Activated T-helper 1 cell treated with anti-CD3 and anti-CD28 coated beads, Interleukin-12 subunit alpha, Interleukin-12 subunit beta, Interleukin-2, Interleukin-4 antibody, amounts not matched to agents 30 ng/mL and 10 ng/mL and 1 ng/mL, durations not matched to agents 14 hours and 24 hours and 36 hours (primary cell): ENCODE measurements at regions of chr12 and their contacts with region 1.

Region 1: DNA sequence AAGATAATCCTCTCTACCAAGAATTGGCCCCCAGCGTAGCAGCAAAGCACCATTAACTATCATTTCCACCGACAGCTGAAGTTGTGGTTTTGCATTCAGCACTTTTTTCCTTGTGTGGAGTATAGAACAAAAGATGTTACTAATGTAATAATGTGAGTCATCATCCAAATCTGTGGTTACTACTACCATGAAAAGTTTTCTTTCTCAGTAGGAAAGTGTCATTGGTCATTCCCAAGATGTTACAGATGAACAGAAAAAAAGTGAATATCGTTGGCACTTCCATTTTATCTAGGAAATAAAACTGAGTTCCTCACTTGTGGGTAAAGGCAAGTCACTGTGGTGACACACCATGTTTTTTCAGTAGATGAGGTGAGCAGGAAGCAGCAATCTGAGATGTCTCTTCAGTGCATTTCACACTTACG is 30.3 kb upstream of the IFNG start:
- DNase-seq: peak; percentile 41
- H3K4me3 Mint-ChIP-seq: peak overlapping the region; percentile 52
- H3K27ac Mint-ChIP-seq: peak overlapping the region; percentile 94
- H3K4me1 Mint-ChIP-seq: peaks cover 75% of the 10 kb centered on the region
- H3K27me3 Mint-ChIP-seq: no peaks in the 10 kb centered on the region

Region 2: GRCh38 chr12:67797185-67797741 is 392.6 kb before region 1 on chr12:
- intact Hi-C with region 1: no loop called
- DNase-seq: no peak
- H3K4me3 Mint-ChIP-seq: no peak overlapping the region
- H3K27ac Mint-ChIP-seq: no peak overlapping the region
- H3K4me1 Mint-ChIP-seq: peaks cover 16% of the 10 kb centered on the region
- H3K27me3 Mint-ChIP-seq: peaks cover 6% of the 10 kb centered on the region

Region 3: GRCh38 chr12:68012712-68013111 is 177.1 kb before region 1 on chr12:
- intact Hi-C with region 1: no loop called
- DNase-seq: no peak
- H3K4me3 Mint-ChIP-seq: no peak overlapping the region
- H3K27ac Mint-ChIP-seq: peak overlapping the region; percentile 76
- H3K4me1 Mint-ChIP-seq: peaks cover 40% of the 10 kb centered on the region
- H3K27me3 Mint-ChIP-seq: no peaks in the 10 kb centered on the region

Region 4: GRCh38 chr12:68158432-68158831 is 31.4 kb before region 1 on chr12:
- intact Hi-C with region 1: loop called (anchors 1 kb)
- DNase-seq: no peak
- H3K4me3 Mint-ChIP-seq: peak overlapping the region; percentile 91
- H3K27ac Mint-ChIP-seq: peak overlapping the region; percentile 87
- H3K4me1 Mint-ChIP-seq: peaks cover 65% of the 10 kb centered on the region
- H3K27me3 Mint-ChIP-seq: no peaks in the 10 kb centered on the region

Region 5: DNA sequence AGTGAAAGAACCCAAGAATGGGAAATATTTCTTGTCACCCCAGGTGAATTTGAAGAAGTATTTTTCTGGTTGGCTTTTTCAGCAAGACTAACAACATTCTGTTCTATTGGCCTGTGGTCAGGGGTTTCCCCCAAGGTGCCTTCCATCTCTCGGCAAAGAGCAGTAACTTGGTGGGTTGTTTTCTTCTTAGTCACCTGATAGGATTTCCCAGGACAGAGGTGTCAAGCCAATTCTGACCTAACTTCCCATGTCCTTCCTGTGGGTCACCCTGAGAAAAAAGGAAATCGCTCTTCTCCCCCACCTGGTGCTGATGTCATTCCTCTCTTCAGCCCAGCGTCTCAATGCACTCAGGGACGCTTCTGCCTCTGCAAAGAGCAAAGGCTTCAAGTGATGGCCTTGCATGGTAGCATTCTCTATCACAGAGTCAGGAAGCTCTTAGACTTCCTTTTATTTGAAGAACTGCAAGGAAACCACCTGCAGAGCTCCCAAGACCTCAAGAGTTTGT is 14.2 kb before region 1 on chr12:
- intact Hi-C with region 1: loop called (anchors 1 kb)
- DNase-seq: peak; percentile 81
- H3K4me3 Mint-ChIP-seq: peak overlapping the region; percentile 32
- H3K27ac Mint-ChIP-seq: peak overlapping the region; percentile 85
- H3K4me1 Mint-ChIP-seq: peaks cover 81% of the 10 kb centered on the region
- H3K27me3 Mint-ChIP-seq: no peaks in the 10 kb centered on the region

Region 6: GRCh38 chr12:68203460-68203875 is 13.6 kb after region 1 on chr12:
- intact Hi-C with region 1: loop called (anchors 1 kb)
- DNase-seq: no peak
- H3K4me3 Mint-ChIP-seq: no peak overlapping the region
- H3K27ac Mint-ChIP-seq: peak overlapping the region; percentile 19
- H3K4me1 Mint-ChIP-seq: peaks cover 75% of the 10 kb centered on the region
- H3K27me3 Mint-ChIP-seq: no peaks in the 10 kb centered on the region